Activated CD4-positive, alpha-beta memory T cell treated with anti-CD3 and anti-CD28 coated beads for 36 hours (primary cell): ENCODE measurements at regions of chr3 and their contacts with region 1.

Region 1: GRCh38 chr3:11820531-11821041 is 26.1 kb downstream of the TAMM41 start:
- DNase-seq: peak; percentile 59
- H3K4me3 Mint-ChIP-seq: no peak overlapping the region
- H3K27ac Mint-ChIP-seq: peak overlapping the region; percentile 70
- H3K4me1 Mint-ChIP-seq: peaks cover 19% of the 10 kb centered on the region
- H3K27me3 Mint-ChIP-seq: no peaks in the 10 kb centered on the region

Region 2: DNA sequence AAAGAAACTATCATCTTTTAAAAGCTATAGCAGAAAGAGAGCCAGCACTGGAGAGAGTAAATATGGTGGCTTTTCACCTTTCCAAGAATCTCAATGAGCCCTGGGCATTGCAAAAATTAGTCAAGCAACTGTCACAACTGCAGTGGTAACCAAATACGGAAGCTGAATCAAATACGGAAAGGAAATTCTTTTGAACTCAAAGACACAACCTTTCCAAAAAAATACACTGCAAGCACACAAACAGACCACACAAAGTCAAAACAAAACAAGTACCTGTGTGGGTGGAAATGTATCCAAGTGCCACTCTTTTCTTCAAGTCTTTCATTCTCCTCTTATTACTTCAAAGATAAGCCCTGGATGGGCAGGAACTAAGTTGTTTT is 194.5 kb before region 1 on chr3:
- CTCF ChIA-PET with region 1: no interaction called
- POLR2A ChIA-PET with region 1: no interaction called
- intact Hi-C with region 1: loop called (anchors 1 kb)
- DNase-seq: peak; percentile 38
- H3K4me3 Mint-ChIP-seq: no peak overlapping the region
- H3K27ac Mint-ChIP-seq: peak overlapping the region; percentile 4
- H3K4me1 Mint-ChIP-seq: peaks cover 59% of the 10 kb centered on the region
- H3K27me3 Mint-ChIP-seq: peaks cover 1% of the 10 kb centered on the region

Region 3: DNA sequence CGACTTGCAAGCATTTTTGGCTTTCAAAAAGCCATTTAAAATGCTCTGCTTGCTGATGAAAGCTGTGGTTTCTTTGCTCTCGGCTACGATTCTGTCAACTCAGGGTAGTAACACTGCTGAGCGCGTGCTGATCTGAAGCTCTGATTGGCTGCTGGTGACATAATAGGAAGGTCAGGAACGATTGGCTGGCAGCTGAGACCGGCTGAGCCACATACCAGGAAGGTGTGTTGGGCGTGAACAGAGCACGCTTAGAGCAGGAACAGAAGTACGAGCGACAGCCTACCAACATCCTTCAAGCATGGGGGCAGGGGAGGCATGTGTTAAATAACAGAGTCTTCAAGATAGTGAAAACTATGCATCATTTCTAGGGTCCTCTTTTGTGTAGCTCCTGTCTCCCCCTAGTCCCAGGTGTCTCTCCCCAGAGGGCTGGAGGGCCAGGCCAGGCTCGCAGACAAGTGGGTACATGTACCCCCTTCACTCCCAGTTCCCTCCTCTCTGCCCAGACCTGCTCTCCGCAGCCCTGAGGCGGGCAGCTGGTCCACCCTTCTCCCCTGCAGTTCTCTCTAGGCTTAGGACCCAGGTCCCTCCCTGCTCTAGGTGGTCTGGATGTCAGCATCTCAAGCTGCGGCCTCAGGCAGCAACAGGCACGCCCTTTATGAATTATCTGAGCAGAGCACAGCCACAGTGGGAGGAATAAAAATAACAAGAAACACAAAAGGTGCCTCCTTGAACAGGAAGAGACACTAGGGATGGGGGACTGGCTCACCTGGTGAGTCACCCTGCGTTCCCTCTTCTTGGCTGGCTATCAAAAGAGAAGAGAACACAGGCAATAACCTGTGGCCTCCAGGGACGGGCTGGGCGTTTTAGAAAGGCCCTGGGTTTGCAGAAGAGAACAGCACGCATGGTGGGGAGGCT is 49.9 kb before region 1 on chr3:
- CTCF ChIA-PET with region 1: no interaction called
- POLR2A ChIA-PET with region 1: no interaction called
- intact Hi-C with region 1: loop called (anchors 1 kb)
- DNase-seq: peak; percentile 88
- H3K4me3 Mint-ChIP-seq: no peak overlapping the region
- H3K27ac Mint-ChIP-seq: peak overlapping the region; percentile 47
- H3K4me1 Mint-ChIP-seq: peaks cover 20% of the 10 kb centered on the region
- H3K27me3 Mint-ChIP-seq: no peaks in the 10 kb centered on the region